Calu3 (cell line): ENCODE measurements at regions of chr2 and their contacts with region 1.

Region 1: DNA sequence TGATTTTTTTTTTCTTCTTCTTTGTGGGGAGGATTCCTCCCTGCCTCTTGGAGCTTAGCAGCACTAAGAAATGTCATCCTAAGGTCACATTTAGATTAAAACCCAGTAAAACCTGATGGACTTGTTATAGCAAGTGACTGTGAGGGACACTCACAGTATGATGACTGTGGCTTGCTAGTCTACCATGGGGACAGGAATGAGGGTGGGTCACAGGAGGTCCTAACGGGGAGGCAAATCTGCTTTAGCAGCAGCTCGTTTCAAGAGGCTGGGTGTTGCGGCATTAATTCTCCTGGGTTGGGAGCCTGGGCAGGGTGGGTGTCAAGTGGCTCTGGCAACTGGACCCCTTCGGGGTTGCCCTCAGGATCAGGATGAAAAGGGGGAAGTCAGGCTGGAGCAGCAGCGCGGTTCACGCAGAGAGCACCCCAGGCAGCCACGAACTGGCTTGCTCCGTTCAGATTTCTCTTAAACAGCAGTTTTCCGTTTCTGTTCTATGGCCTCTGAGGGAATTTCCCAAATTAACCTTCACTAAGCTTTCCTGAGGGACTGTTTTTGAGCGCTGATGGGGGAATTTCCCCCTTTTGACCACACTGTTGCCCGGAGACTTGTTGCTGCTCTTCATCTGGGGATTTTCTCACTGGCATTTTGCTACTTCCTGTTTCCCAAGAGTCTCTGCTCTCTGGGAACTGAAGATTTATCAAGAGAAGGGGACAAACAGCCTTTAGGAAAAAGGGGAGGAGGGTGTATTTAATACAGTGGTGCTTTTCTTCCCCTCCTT is 59.8 kb upstream of the PELI1 start:
- DNase-seq: peak; percentile 49
- H3K4me3 Mint-ChIP-seq: peak overlapping the region; percentile 65
- H3K27ac Mint-ChIP-seq: peak overlapping the region; percentile 99
- H3K4me1 Mint-ChIP-seq: peaks cover 19% of the 10 kb centered on the region
- H3K27me3 Mint-ChIP-seq: no peaks in the 10 kb centered on the region
- CTCF ChIP-seq: no peak

Region 2: DNA sequence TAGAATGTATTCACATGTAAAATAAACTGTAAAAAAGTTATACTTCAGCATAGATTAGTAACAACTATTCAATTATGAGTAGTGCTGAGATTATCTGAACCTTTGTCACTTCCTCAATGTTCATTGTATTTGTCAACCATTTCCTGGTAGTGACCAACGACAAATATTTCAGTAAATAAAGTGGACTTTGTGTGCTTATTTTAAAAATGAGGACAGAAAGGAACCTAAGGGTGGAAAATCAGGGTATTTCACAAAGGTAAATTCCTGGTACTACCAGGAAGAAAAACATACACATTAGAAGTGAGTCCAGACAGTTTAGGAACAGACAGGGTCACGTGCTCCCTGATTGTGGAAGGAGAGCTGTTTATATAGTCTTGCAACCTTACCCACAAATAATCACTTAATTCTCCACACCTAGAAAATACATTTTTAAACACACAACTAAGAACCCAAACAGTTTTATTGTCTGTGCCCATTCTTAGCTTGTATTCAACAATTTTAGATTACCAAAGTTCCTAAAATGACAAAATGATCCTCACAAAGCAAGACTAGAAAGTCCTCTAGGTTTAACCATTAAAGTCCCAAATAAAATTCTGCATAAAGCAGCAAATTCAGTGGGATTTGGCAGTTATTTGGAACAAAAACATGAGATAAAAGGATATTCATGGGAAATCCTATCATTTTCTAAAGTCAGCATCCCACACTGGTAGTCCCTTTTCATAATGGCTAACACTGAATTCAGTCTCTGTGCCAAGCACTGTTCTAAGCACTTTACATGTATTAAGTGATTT is 88.0 kb before region 1 on chr2:
- CTCF ChIA-PET with region 1: no interaction called
- intact Hi-C with region 1: no loop called
- DNase-seq: peak; percentile 22
- H3K4me3 Mint-ChIP-seq: peak overlapping the region; percentile 34
- H3K27ac Mint-ChIP-seq: peak overlapping the region; percentile 93
- H3K4me1 Mint-ChIP-seq: peaks cover 49% of the 10 kb centered on the region
- H3K27me3 Mint-ChIP-seq: no peaks in the 10 kb centered on the region
- CTCF ChIP-seq: no peak

Region 3: GRCh38 chr2:64277101-64277849 is 73.2 kb after region 1 on chr2:
- CTCF ChIA-PET with region 1: no interaction called
- intact Hi-C with region 1: loop called (anchors 5 kb)
- DNase-seq: peak; percentile 54
- H3K4me3 Mint-ChIP-seq: no peak overlapping the region
- H3K27ac Mint-ChIP-seq: peak overlapping the region; percentile 18
- H3K4me1 Mint-ChIP-seq: peaks cover 57% of the 10 kb centered on the region
- H3K27me3 Mint-ChIP-seq: no peaks in the 10 kb centered on the region
- CTCF ChIP-seq: no peak

Region 4: GRCh38 chr2:64311948-64312621 is 108.0 kb after region 1 on chr2:
- CTCF ChIA-PET with region 1: interaction called, 4 read pairs
- intact Hi-C with region 1: loop called (anchors 5 kb)
- DNase-seq: peak; percentile 79
- H3K4me3 Mint-ChIP-seq: peak overlapping the region; percentile 40
- H3K27ac Mint-ChIP-seq: peak overlapping the region; percentile 27
- H3K4me1 Mint-ChIP-seq: peaks cover 21% of the 10 kb centered on the region
- H3K27me3 Mint-ChIP-seq: peaks cover 13% of the 10 kb centered on the region
- CTCF ChIP-seq: peak; percentile 35